ENCODE measurements at regions of chr11 and their contacts with region 1.

Region 1: GRCh38 chr11:121482231-121483129 is 29.7 kb upstream of the SORL1-AS1 start:
- DNase-seq: peak; percentile 51
- CTCF ChIP-seq: no peak

Region 2: GRCh38 chr11:120945042-120945441 is 537.4 kb before region 1 on chr11:
- CTCF ChIA-PET with region 1: no interaction called
- POLR2A ChIA-PET with region 1: no interaction called
- DNase-seq: no peak
- CTCF ChIP-seq: peak; percentile 21

Region 3: GRCh38 chr11:121394785-121395184 is 87.7 kb before region 1 on chr11:
- CTCF ChIA-PET with region 1: no interaction called
- POLR2A ChIA-PET with region 1: no interaction called
- DNase-seq: no peak
- CTCF ChIP-seq: no peak

Region 4: GRCh38 chr11:121414141-121414913 is 68.2 kb before region 1 on chr11:
- CTCF ChIA-PET with region 1: no interaction called
- POLR2A ChIA-PET with region 1: no interaction called
- DNase-seq: no peak
- CTCF ChIP-seq: no peak

Region 5: DNA sequence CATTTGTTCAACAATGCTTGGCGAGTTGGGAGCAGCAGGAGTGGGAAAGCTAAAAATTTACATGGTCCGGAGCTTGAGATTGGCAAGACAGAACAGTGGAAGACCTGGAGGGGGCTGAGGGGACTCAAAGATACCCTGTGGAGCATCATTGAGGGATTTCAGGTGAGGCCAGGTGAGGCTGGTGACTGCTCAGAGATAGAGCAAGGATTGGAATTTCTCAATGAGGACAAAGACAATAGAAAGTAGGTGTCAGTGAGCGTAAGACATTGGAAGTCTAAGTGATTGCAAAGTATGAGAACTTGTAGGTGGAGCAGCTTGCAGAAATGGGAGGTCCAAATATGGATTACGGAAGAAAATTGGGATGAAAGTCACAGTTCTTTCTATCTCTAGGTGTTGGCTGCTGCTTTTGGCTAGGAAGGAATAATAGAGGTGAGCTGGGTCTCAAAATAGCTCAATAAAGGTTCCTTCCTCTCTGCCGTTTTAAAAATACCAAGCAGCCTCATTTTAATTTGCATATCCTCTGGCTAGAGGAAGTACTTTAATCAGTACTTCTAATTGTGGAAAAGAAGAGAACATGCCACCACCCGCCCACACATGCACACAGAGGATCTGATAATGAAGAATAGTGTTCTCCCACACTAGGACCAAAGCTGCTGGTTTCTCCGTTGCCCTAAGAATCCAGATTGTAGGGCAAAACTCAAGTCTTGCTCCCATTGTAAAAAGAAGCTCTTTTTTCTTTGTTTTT is 12.0 kb after region 1 on chr11:
- CTCF ChIA-PET with region 1: interaction called, 27 read pairs
- POLR2A ChIA-PET with region 1: interaction called, 3 read pairs
- DNase-seq: peak; percentile 34
- CTCF ChIP-seq: no peak